Activated naive CD4-positive, alpha-beta T cell treated with anti-CD3 and anti-CD28 coated beads for 36 hours (primary cell): ENCODE measurements at regions of chr1 and their contacts with region 1.

Region 1: DNA sequence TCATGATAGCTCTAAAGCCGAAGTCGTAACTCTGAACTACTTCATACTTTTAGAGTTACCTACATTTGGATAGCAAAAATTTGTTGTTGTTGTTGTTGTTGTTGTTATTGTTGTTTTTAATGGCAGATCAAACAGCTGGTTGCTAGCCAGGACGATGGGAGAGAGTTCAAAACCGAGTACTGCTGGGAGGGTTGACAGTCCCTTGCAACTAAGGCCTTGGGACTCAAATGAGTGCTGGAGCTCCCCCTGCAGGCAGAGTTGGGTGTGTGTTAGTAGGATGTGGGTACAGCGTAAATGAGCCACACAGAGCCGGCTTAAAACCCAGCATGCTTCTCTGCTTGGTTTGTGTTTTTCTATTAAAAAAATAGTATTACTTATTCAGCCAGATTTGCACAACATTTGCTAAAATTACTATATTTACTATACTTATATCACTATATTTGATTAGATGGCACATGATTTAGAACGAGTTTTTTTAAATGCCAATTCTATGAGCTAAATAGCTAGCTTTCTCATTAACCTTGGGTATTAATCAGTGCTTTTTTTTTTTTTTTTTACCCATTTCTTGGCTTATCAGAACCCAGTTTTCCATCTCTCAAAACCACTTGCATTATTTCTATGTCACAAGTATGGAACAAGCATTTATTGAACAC is 129.2 kb upstream of the SYT6 start:
- DNase-seq: peak; percentile 94
- H3K4me3 Mint-ChIP-seq: no peak overlapping the region
- H3K27ac Mint-ChIP-seq: no peak overlapping the region
- H3K4me1 Mint-ChIP-seq: peaks cover 5% of the 10 kb centered on the region
- H3K27me3 Mint-ChIP-seq: no peaks in the 10 kb centered on the region

Region 2: GRCh38 chr1:113140588-113141446 is 1142.1 kb before region 1 on chr1:
- CTCF ChIA-PET with region 1: no interaction called
- intact Hi-C with region 1: loop called (anchors 2 kb)
- DNase-seq: peak; percentile 81
- H3K4me3 Mint-ChIP-seq: no peak overlapping the region
- H3K27ac Mint-ChIP-seq: no peak overlapping the region
- H3K4me1 Mint-ChIP-seq: peaks cover 22% of the 10 kb centered on the region
- H3K27me3 Mint-ChIP-seq: no peaks in the 10 kb centered on the region

Region 3: GRCh38 chr1:113849060-113849459 is 433.8 kb before region 1 on chr1:
- CTCF ChIA-PET with region 1: no interaction called
- intact Hi-C with region 1: loop called (anchors 10 kb)
- DNase-seq: no peak
- H3K4me3 Mint-ChIP-seq: no peak overlapping the region
- H3K27ac Mint-ChIP-seq: no peak overlapping the region
- H3K4me1 Mint-ChIP-seq: peaks cover 13% of the 10 kb centered on the region
- H3K27me3 Mint-ChIP-seq: no peaks in the 10 kb centered on the region

Region 4: DNA sequence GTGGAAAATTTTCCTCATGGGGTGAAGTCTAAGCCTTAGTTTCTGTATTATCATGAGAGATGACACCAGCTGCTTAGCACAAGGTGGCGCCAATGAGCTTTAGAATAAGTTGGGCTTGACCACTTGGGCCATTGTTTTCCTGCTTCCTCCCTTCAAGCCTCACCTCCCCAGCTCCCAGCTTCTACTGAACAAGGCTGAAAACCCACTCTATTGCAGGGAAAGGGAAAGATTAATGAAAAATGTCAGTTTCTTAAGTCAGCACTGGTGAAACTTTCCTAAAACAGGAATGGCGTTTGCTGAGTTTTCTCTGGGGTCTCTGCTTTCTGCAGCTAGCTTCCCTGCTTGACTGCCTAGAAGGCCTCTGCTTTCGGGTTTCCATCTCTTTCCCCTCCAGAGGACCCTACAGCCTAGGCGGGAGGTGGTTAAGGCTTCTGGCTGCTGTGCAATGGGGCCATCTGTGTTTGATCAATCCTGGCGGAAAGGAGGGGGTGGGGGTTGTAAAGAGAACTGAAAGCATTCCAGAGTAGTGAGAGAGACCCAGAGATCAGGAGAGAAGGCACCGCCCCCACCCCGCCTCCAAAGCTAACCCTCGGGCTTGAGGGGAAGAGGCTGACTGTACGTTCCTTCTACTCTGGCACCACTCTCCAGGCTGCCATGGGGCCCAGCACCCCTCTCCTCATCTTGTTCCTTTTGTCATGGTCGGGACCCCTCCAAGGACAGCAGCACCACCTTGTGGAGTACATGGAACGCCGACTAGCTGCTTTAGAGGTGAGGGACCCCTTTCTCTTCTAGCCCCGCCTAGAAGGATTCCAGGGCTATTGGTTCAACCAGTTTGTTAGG is 303.8 kb before region 1 on chr1 and contains the start of gene OLFML3:
- CTCF ChIA-PET with region 1: interaction called, 46 read pairs
- intact Hi-C with region 1: loop called (anchors 1 kb)
- DNase-seq: peak; percentile 80
- H3K4me3 Mint-ChIP-seq: no peak within 1 kb of the TSS
- H3K27ac Mint-ChIP-seq: no peak within 1 kb of the TSS
- H3K4me1 Mint-ChIP-seq: peaks cover 34% of the 10 kb centered on the region
- H3K27me3 Mint-ChIP-seq: no peaks in the 10 kb centered on the region
- total RNA-seq, gene OLFML3: 0.10 TPM in 1 of 2 experiments, not detected in the other

Region 5: DNA sequence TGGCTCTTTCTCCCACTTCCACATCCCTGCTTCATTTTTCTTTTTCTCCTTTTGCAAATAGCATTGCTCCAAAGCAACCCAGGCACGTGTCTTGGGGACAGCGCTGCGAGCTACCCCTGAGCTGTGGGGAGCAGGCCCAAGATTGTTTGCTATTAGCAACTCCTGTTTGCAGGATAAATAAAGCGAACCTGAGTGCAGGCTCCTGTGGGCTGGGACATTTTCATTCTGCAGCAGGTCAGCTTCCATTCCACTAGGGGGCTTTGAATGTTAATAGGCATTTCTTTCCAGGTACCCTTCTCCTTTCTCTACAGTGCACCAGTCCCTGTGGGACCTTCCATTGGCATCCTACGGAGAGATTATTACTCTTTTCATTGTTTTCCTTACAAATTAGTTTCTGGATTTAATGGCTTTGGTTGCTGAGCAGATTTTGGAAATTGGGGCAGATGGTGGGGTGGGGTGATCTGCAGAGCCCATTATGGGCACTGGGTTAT is 249.6 kb before region 1 on chr1:
- CTCF ChIA-PET with region 1: interaction called, 16 read pairs
- intact Hi-C with region 1: no loop called
- DNase-seq: no peak
- H3K4me3 Mint-ChIP-seq: no peak overlapping the region
- H3K27ac Mint-ChIP-seq: no peak overlapping the region
- H3K4me1 Mint-ChIP-seq: no peaks in the 10 kb centered on the region
- H3K27me3 Mint-ChIP-seq: no peaks in the 10 kb centered on the region

Region 6: DNA sequence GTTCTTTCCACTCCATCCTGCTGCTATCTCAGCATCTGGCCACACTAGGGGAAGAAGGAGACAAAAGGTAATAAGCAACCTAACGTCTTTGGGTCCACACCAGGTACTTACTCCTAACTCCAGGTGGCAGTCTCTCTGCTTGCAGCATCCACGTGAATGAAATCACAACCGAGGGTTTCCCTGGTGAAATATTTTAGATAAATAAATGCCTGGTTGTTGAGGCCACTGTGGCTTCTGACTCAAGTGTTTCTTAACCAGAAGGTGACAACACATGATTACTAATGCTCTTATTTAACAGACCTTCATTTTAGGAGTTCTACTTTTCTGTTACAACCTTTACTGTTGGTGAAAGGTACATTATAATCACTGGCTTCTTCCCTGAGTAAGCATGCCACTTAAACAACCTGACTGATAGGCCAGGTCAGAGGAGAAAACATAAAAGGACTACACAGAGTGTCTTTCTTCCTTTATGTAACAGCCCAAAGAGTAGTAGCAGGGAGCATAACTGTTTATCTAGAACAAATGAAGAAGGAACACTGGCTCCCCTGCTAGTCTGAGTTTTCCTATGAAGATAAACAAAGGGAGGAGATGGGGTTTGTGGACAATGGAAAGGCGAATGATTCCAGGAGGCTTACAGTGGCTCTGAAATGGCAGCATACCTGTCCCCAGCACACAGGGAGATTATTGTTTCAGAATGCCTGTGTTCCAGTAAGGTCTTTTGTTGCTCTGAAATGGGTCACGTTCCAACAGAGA is 189.1 kb before region 1 on chr1:
- CTCF ChIA-PET with region 1: interaction called, 4 read pairs
- intact Hi-C with region 1: loop called (anchors 10 kb)
- DNase-seq: no peak
- H3K4me3 Mint-ChIP-seq: no peak overlapping the region
- H3K27ac Mint-ChIP-seq: no peak overlapping the region
- H3K4me1 Mint-ChIP-seq: peaks cover 3% of the 10 kb centered on the region
- H3K27me3 Mint-ChIP-seq: no peaks in the 10 kb centered on the region

Region 7: GRCh38 chr1:114270282-114270681 is 12.6 kb before region 1 on chr1:
- CTCF ChIA-PET with region 1: interaction called, 22 read pairs
- intact Hi-C with region 1: no loop called
- DNase-seq: no peak
- H3K4me3 Mint-ChIP-seq: no peak overlapping the region
- H3K27ac Mint-ChIP-seq: no peak overlapping the region
- H3K4me1 Mint-ChIP-seq: no peaks in the 10 kb centered on the region
- H3K27me3 Mint-ChIP-seq: peaks cover 7% of the 10 kb centered on the region

Region 8: DNA sequence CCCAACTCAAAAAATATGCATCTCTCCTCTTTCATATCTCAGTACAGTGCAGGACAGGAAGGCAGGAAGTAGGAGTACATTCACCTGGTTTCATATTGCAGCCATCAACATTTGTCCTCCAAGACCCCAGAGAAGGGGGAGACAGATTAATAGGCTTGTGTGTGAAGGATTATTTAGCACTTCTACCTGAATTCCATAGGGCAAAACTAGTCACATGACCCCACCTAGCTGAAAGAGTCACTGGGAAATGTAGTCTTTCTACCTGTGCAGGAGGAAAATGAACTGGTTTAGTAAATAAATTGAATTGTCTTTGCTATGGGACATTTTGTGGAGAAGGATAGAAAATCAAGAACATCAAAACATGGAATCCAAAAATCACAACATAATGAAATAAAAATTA is 242.1 kb after region 1 on chr1:
- CTCF ChIA-PET with region 1: no interaction called
- intact Hi-C with region 1: no loop called
- DNase-seq: no peak
- H3K4me3 Mint-ChIP-seq: no peak overlapping the region
- H3K27ac Mint-ChIP-seq: no peak overlapping the region
- H3K4me1 Mint-ChIP-seq: no peaks in the 10 kb centered on the region
- H3K27me3 Mint-ChIP-seq: peaks cover 2% of the 10 kb centered on the region